PC-3 (cell line): ENCODE measurements at regions of chr5 and their contacts with region 1.

Region 1: DNA sequence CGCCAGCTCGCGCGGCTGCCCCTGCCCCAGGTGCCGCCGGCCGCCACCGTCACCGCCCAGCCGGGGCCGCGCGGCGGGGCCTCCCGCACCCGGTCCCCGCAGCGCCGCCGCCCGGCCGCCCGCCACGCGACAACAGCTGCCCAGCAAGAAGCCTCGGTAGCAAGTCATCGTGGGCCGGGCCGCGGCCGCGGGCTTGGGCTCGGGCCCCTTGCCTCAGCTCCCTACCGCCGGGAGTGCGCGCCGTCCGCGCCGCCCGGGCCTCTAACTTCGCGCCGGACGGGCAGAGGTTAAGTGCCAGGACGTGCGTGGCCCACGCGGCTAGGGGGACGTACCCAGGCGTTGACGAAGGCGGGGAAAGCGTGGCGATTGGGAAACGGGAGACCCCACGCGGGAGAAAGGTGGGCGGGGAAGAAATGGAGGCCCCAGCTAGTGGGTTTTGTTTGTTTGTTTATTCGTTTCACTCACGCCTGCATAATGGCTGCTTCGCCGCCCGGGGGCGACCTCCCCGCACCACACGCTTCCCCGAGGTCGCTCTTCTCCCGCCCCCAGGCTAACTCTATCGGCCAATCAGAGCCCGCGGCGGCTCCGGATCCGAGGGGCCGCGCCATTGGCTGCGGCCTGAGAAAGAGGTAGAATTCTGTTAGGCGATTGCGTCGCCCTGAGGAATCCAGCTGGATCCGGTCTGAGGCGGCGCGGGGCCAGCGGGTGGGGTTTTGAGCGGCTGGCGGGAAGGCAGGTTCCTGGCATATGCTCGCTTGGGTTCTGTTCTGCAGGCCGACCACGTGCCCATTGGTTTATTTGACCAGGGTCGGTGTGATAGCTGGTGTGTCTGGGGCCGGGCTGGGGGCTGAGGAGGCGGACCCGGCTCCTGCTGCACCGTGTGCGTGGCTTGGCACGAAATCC is at the start of gene NADK2:
- DNase-seq: peak; percentile 97
- ATAC-seq: peak; percentile 75
- H3K4me3 ChIP-seq: peak within 1 kb of the TSS; percentile 75
- H3K27ac ChIP-seq: peak within 1 kb of the TSS; percentile 69
- H3K4me1 ChIP-seq: peaks cover 38% of the 10 kb centered on the region
- H3K27me3 ChIP-seq: no peaks in the 10 kb centered on the region
- CTCF ChIP-seq: peak; percentile 58
- total RNA-seq, gene NADK2: 17.7 and 22.9 TPM in 2 replicates

Region 2: DNA sequence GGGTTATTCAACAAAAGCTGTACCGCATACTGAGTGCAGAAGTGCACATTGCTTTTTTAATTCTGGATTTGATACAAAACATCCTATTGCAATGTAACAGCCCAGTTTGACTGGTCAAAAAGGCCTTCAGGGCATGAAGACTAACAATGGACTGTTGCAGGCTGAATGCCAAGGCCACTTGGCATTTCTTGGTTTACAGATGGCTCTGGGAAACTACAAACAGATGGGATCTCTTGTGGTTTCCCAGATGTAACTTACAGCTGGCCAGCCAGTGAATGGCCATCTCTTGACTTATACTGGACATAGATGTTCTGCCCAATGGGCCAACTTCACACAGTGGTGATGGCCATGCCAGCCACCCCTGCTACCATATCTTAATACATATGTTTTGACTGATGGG is 212.0 kb before region 1 on chr5:
- CTCF ChIA-PET with region 1: no interaction called
- POLR2A ChIA-PET with region 1: no interaction called
- intact Hi-C with region 1: no loop called
- DNase-seq: no peak
- ATAC-seq: no peak
- H3K4me3 ChIP-seq: no peak overlapping the region
- H3K27ac ChIP-seq: no peak overlapping the region
- H3K4me1 ChIP-seq: no peaks in the 10 kb centered on the region
- H3K27me3 ChIP-seq: peaks cover 14% of the 10 kb centered on the region; the same call in 1 of the 2 replicates
- CTCF ChIP-seq: no peak

Region 3: GRCh38 chr5:36138900-36139683 is 102.8 kb before region 1 on chr5:
- CTCF ChIA-PET with region 1: no interaction called
- POLR2A ChIA-PET with region 1: no interaction called
- intact Hi-C with region 1: no loop called
- DNase-seq: no peak
- ATAC-seq: no peak
- H3K4me3 ChIP-seq: no peak overlapping the region
- H3K27ac ChIP-seq: no peak overlapping the region
- H3K4me1 ChIP-seq: no peaks in the 10 kb centered on the region
- H3K27me3 ChIP-seq: no peaks in the 10 kb centered on the region
- CTCF ChIP-seq: no peak

Region 4: GRCh38 chr5:36151434-36152323 is 90.2 kb before region 1 on chr5 and contains the starts of genes LMBRD2 and SKP2:
- CTCF ChIA-PET with region 1: interaction called, 3 read pairs
- POLR2A ChIA-PET with region 1: no interaction called
- intact Hi-C with region 1: loop called (anchors 2 kb)
- DNase-seq: peak; percentile 99
- ATAC-seq: peak; percentile 97
- H3K4me3 ChIP-seq: peak within 1 kb of the TSS; percentile 84
- H3K27ac ChIP-seq: peak within 1 kb of the TSS; percentile 4; the same call in 1 of the 2 replicates
- H3K4me1 ChIP-seq: peaks cover 38% of the 10 kb centered on the region
- H3K27me3 ChIP-seq: no peaks in the 10 kb centered on the region
- CTCF ChIP-seq: no peak
- total RNA-seq, gene LMBRD2: 9.1 and 21.1 TPM in 2 replicates
- total RNA-seq, gene SKP2: 32.0 and 33.2 TPM in 2 replicates

Region 5: DNA sequence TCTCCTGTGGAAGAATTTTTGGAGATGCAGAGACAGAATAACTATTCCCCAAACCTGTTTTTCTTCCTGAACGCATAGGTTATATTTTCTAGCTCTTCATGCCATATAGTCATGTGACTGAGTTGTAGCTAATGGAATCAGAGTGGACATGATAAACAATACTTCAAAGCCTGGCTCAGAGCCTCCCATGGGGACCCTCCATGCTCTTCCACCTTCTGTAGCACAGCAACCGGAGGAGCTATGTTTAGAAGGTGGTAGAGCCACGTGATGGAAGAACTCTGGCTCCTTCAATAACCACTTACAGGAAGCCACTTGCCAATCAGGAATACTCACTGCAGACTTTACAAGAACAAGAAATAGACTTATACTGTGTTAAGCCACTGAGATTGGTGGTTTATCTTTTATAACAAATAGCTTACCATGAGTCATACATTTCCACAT is 39.3 kb before region 1 on chr5:
- CTCF ChIA-PET with region 1: no interaction called
- POLR2A ChIA-PET with region 1: interaction called, 6 read pairs
- intact Hi-C with region 1: loop called (anchors 5 kb)
- DNase-seq: peak; percentile 32
- ATAC-seq: peak; percentile 67
- H3K4me3 ChIP-seq: no peak overlapping the region
- H3K27ac ChIP-seq: no peak overlapping the region
- H3K4me1 ChIP-seq: peaks cover 17% of the 10 kb centered on the region
- H3K27me3 ChIP-seq: no peaks in the 10 kb centered on the region
- CTCF ChIP-seq: no peak

Region 6: GRCh38 chr5:36305571-36306326 is 63.9 kb after region 1 on chr5:
- CTCF ChIA-PET with region 1: no interaction called
- POLR2A ChIA-PET with region 1: no interaction called
- intact Hi-C with region 1: loop called (anchors 1 kb)
- DNase-seq: peak; percentile 63
- ATAC-seq: peak; percentile 65
- H3K4me3 ChIP-seq: no peak overlapping the region
- H3K27ac ChIP-seq: no peak overlapping the region
- H3K4me1 ChIP-seq: peaks cover 19% of the 10 kb centered on the region
- H3K27me3 ChIP-seq: peaks cover 21% of the 10 kb centered on the region
- CTCF ChIP-seq: peak; percentile 90